HepG2 (cell line): ENCODE measurements at regions of chr20 and their contacts with region 1.

Region 1: GRCh38 chr20:22575087-22575721 is 9.2 kb downstream of the FOXA2 start:
- DNase-seq: peak; percentile 23
- ATAC-seq: no peak
- H3K4me3 ChIP-seq: peak overlapping the region in 2 of 3 experiments; percentile 32 to 95; a peak in 2 of 6 replicates
- H3K27ac ChIP-seq: peak overlapping the region; percentile 86
- H3K4me1 ChIP-seq: peaks cover 85% of the 10 kb centered on the region
- H3K27me3 ChIP-seq: no peaks in the 10 kb centered on the region; a peak in 1 of 5 replicates
- CTCF ChIP-seq: no peak
- EP300 ChIP-seq: no peak
- POLR2A ChIP-seq: no peak
- RAD21 ChIP-seq: no peak

Region 2: DNA sequence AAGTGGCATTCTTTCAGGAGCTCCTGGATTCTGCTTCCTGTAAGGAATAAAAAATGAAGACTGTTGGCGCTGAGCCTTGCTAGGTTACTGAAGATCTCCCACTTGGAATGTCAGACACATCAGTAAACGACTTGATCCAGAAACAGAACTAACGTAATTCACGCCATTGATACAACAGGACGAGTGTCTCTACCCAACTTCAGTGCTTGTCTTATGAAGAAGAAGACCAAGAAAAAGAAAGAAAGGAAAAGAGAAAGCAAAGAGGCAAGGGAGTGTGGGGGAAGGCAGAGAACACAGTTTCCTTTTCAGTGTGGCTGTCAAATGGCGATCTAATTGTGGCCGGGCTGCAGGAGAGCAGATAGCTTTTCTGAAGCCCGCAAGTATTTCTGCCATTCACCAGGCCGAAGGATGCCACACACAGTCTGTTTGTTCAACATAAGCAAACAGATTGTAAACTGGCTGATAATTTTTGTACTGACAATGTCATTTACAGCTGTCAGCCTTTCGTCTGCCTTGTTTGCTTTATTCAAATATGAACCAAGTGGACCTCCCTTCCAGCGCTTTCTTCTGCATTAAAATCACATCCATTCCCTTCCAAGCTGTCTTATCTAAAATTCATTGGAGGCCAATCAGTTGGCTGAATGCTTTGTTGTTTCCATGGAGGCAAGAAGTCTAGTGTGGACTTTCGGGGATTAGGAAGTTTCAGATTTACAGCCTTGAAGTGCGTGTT is 171.4 kb before region 1 on chr20:
- CTCF ChIA-PET with region 1: no interaction called
- POLR2A ChIA-PET with region 1: interaction called, 12 read pairs
- in situ Hi-C with region 1: no loop called
- intact Hi-C with region 1: no loop called
- DNase-seq: peak; percentile 77
- ATAC-seq: peak; percentile 90
- H3K4me3 ChIP-seq: peak overlapping the region; percentile 47 to 69 (median 69)
- H3K27ac ChIP-seq: peak overlapping the region; percentile 17
- H3K4me1 ChIP-seq: peaks cover 47% of the 10 kb centered on the region
- H3K27me3 ChIP-seq: peaks cover 0 to 12% of the 10 kb centered on the region in 2 experiments; a peak in 3 of 5 replicates
- CTCF ChIP-seq: no peak
- EP300 ChIP-seq: 0 out of 4 replicates have a peak, but pooled peaks of 1 of the 2 experiments have one; percentile 33
- POLR2A ChIP-seq: no peak
- RAD21 ChIP-seq: 0 out of 2 replicates have a peak, but pooled peaks have one; percentile 7

Region 3: GRCh38 chr20:22411627-22412450 is 163.4 kb before region 1 on chr20:
- CTCF ChIA-PET with region 1: no interaction called
- POLR2A ChIA-PET with region 1: interaction called, 5 read pairs
- in situ Hi-C with region 1: no loop called
- intact Hi-C with region 1: loop called (anchors 1 kb)
- DNase-seq: peak; percentile 96
- ATAC-seq: peak; percentile 100
- H3K4me3 ChIP-seq: peak overlapping the region; percentile 17 to 56 (median 20); a peak in 4 of 6 replicates
- H3K27ac ChIP-seq: peak overlapping the region; percentile 77
- H3K4me1 ChIP-seq: peaks cover 57% of the 10 kb centered on the region
- H3K27me3 ChIP-seq: no peaks in the 10 kb centered on the region; a peak in 1 of 5 replicates
- CTCF ChIP-seq: 0 out of 2 replicates have a peak, but pooled peaks have one; percentile 4
- EP300 ChIP-seq: peak; percentile 51 to 89; a peak in 3 of 4 replicates
- POLR2A ChIP-seq: peak; percentile 69 to 73
- RAD21 ChIP-seq: no peak

Region 4: DNA sequence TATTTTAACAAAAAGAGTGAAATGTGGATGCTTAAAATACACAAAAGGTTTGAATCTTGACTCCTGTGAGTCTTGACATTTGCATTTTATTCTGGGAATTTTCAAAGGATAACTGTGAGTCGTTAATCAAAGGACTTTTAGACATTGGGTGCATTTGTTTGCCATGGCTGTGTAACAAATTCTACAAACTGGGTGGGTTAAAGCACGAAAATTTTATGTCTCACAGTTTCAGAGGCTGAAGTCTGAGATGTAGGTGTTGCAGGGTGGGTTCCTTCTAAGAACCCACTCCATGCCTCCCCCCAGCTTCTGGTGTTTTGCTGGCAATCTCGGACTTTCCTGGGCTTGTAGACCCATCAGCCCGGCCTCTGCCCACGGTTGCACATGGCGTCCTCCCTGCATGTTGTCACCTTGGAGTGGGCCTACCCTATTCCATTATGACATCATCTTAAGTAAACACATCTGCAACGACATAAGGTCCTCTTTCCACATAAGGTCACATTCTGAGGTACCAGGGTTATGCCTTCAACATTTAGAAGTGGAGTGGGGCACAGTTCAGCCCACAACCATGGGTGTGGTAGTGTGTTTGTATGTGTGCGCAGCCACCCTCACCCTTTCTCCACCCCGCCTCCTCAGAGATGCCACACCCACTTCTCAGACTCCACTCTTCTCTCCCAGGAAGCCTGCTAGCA is 103.9 kb before region 1 on chr20:
- CTCF ChIA-PET with region 1: no interaction called
- POLR2A ChIA-PET with region 1: interaction called, 10 read pairs
- in situ Hi-C with region 1: no loop called
- intact Hi-C with region 1: no loop called
- DNase-seq: peak; percentile 72
- ATAC-seq: peak; percentile 44
- H3K4me3 ChIP-seq: peak overlapping the region in 1 of 3 experiments; percentile 4; a peak in 1 of 6 replicates
- H3K27ac ChIP-seq: peak overlapping the region; percentile 2
- H3K4me1 ChIP-seq: peaks cover 56% of the 10 kb centered on the region
- H3K27me3 ChIP-seq: peaks cover 7 to 17% of the 10 kb centered on the region in 2 experiments; a peak in 3 of 5 replicates
- CTCF ChIP-seq: no peak
- EP300 ChIP-seq: peak in 1 of 2 experiments; percentile 38; a peak in 1 of 4 replicates
- POLR2A ChIP-seq: no peak
- RAD21 ChIP-seq: no peak

Region 5: DNA sequence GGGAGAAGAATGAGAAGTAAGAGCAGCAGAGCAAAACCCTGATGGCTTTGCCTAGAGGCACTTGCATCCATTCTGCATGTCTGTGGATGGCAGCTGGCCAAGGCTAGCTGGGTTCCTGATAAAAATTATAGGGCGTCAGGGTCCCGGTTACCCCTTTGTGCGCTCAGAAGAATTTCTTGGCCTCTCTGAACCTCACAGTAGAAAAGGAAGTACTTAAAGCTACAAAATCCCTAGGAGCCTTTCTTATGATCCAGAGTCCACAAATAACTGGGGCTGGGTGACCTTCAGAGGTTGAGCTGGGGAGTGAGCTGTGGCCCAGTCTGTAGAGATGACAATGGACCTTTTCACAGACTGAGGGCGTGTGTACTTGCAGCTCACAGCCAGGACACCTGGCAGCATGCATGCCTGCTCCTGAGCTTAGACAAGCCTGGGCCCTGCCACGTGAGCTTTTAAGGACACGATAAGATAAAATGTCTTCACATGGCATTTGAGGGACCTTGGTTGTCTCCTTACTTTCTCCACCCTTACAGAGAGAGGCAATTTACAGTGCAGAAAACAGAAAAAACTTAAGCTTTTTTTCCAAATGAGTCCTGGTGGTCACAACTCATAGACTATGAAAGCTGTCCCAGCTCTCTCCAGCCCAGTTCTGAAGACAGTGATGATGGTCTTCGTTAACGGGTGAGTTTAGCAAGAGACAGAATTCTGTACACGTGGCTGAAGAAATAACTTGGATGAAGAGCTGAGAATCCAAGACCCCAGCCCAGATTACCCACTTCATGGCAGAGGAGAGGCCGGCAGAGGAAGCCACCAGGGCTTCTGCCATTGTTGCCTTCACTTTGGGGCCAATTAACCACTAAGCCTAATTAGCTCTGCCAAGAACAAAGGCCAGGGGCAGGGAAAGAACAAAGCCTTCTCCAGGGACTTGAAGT is 41.1 kb before region 1 on chr20:
- CTCF ChIA-PET with region 1: no interaction called
- POLR2A ChIA-PET with region 1: interaction called, 37 read pairs
- in situ Hi-C with region 1: no loop called
- intact Hi-C with region 1: loop called (anchors 2 kb)
- DNase-seq: peak; percentile 97
- ATAC-seq: peak; percentile 98
- H3K4me3 ChIP-seq: no peak overlapping the region
- H3K27ac ChIP-seq: peak overlapping the region; percentile 77
- H3K4me1 ChIP-seq: peaks cover 89% of the 10 kb centered on the region
- H3K27me3 ChIP-seq: no peaks in the 10 kb centered on the region
- CTCF ChIP-seq: peak; percentile 48
- EP300 ChIP-seq: peak; percentile 80 to 89; a peak in 3 of 4 replicates
- POLR2A ChIP-seq: 0 out of 4 replicates have a peak, but pooled peaks have one; percentile 26 to 48
- RAD21 ChIP-seq: peak; percentile 56; the same call in 1 of the 2 replicates

Region 6: GRCh38 chr20:22711987-22712755 is 137.0 kb after region 1 on chr20:
- CTCF ChIA-PET with region 1: no interaction called
- POLR2A ChIA-PET with region 1: no interaction called
- in situ Hi-C with region 1: no loop called
- intact Hi-C with region 1: no loop called
- DNase-seq: no peak
- ATAC-seq: no peak
- H3K4me3 ChIP-seq: no peak overlapping the region
- H3K27ac ChIP-seq: no peak overlapping the region
- H3K4me1 ChIP-seq: no peaks in the 10 kb centered on the region
- H3K27me3 ChIP-seq: no peaks in the 10 kb centered on the region
- CTCF ChIP-seq: no peak
- EP300 ChIP-seq: no peak
- POLR2A ChIP-seq: no peak
- RAD21 ChIP-seq: no peak

Region 7: DNA sequence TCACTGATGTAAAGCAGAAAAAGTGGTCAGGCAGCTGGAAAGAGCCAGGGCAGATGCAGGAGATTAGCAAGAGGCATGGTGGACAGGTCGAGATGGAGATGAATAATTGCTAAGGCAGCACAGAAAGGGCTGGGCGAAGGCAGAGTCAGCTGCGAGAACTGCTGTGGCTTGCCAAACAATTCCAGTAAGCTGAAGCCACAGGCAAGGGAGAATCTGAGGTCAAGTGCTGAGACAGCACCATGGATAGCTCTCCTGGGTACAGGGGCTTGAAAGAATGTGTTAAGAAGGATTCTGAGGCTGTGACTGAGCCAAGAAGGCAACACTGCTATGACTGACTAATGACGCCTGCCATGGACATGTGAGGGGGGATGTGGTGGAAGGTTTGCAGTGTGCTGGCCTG is 230.0 kb after region 1 on chr20:
- CTCF ChIA-PET with region 1: no interaction called
- POLR2A ChIA-PET with region 1: no interaction called
- in situ Hi-C with region 1: no loop called
- intact Hi-C with region 1: no loop called
- DNase-seq: peak; percentile 17
- ATAC-seq: no peak
- H3K4me3 ChIP-seq: no peak overlapping the region
- H3K27ac ChIP-seq: no peak overlapping the region
- H3K4me1 ChIP-seq: no peaks in the 10 kb centered on the region
- H3K27me3 ChIP-seq: no peaks in the 10 kb centered on the region
- CTCF ChIP-seq: no peak
- EP300 ChIP-seq: no peak
- POLR2A ChIP-seq: no peak
- RAD21 ChIP-seq: no peak

Region 8: GRCh38 chr20:22815603-22816315 is 240.6 kb after region 1 on chr20:
- CTCF ChIA-PET with region 1: no interaction called
- POLR2A ChIA-PET with region 1: no interaction called
- in situ Hi-C with region 1: no loop called
- intact Hi-C with region 1: no loop called
- DNase-seq: no peak
- ATAC-seq: peak; percentile 75
- H3K4me3 ChIP-seq: no peak overlapping the region
- H3K27ac ChIP-seq: no peak overlapping the region
- H3K4me1 ChIP-seq: no peaks in the 10 kb centered on the region
- H3K27me3 ChIP-seq: no peaks in the 10 kb centered on the region
- CTCF ChIP-seq: no peak
- EP300 ChIP-seq: no peak
- POLR2A ChIP-seq: no peak
- RAD21 ChIP-seq: no peak